ENCODE measurements at regions of chr5 and their contacts with region 1.

Region 1: GRCh38 chr5:35672995-35673394 is 55.3 kb downstream of the SPEF2 start:
- DNase-seq: no peak
- H3K4me3 ChIP-seq: no peak overlapping the region
- H3K27ac ChIP-seq: no peak overlapping the region
- H3K4me1 ChIP-seq: no peaks in the 10 kb centered on the region
- H3K27me3 ChIP-seq: no peaks in the 10 kb centered on the region
- CTCF ChIP-seq: no peak

Region 2: DNA sequence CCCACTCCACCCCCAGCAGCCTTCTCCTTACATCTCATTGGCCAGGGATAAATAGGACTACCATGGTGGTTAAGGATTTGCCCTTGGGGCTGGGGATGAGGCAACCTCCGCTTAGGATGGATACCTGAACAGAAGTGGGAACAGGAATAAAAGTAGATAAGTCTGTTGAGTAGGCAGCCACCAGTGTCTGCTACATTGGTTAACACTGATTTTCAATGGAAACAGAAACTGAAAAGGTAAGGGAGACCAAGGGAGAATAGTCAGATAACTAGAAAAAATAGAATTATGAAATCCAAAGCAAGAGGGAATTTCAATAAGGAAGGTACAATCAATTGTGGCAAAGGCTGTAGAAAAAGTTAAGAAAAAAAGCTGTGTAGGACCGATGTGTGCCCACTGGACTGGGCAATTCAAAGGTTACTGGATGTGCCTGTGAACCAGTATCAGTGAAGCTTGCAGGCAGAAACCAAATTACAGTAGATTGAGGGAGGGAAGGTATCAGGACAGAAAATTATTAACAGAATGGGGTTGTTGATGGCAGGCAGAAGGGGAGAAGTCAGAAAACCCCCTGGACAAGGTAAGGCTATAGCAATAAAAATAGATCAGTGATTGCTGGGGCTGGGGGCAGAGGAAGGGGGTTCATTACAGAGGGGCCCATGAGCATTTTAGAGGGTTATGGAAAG is 694.9 kb before region 1 on chr5:
- CTCF ChIA-PET with region 1: no interaction called
- POLR2A ChIA-PET with region 1: interaction called, 12 read pairs
- intact Hi-C with region 1: no loop called
- DNase-seq: no peak
- H3K4me3 ChIP-seq: no peak overlapping the region
- H3K27ac ChIP-seq: no peak overlapping the region
- H3K4me1 ChIP-seq: no peaks in the 10 kb centered on the region
- H3K27me3 ChIP-seq: peaks cover 40% of the 10 kb centered on the region
- CTCF ChIP-seq: no peak

Region 3: DNA sequence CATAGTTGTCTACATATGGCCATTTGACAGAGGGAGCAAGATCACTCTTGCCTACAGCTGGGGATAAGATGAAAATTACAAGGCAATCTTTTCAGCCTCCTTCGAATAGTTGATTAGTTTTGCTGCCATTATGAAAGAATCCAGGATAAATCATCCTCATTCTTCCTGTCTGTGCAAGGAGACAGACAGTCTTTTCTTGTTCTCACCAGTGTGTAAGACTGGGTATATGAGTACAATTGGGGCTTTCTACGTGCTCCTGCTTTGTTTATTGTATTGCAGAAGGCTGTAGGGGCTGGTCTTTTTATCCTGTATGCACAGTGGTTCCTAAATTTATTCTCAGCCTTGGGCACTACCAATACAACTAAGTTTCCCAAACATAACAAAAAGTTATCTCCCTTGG is 21.5 kb after region 1 on chr5:
- CTCF ChIA-PET with region 1: interaction called, 10 read pairs
- POLR2A ChIA-PET with region 1: no interaction called
- intact Hi-C with region 1: no loop called
- DNase-seq: no peak
- H3K4me3 ChIP-seq: no peak overlapping the region
- H3K27ac ChIP-seq: no peak overlapping the region
- H3K4me1 ChIP-seq: no peaks in the 10 kb centered on the region
- H3K27me3 ChIP-seq: no peaks in the 10 kb centered on the region
- CTCF ChIP-seq: no peak